ENCODE measurements at regions of chr6 and their contacts with region 1.

Region 1: DNA sequence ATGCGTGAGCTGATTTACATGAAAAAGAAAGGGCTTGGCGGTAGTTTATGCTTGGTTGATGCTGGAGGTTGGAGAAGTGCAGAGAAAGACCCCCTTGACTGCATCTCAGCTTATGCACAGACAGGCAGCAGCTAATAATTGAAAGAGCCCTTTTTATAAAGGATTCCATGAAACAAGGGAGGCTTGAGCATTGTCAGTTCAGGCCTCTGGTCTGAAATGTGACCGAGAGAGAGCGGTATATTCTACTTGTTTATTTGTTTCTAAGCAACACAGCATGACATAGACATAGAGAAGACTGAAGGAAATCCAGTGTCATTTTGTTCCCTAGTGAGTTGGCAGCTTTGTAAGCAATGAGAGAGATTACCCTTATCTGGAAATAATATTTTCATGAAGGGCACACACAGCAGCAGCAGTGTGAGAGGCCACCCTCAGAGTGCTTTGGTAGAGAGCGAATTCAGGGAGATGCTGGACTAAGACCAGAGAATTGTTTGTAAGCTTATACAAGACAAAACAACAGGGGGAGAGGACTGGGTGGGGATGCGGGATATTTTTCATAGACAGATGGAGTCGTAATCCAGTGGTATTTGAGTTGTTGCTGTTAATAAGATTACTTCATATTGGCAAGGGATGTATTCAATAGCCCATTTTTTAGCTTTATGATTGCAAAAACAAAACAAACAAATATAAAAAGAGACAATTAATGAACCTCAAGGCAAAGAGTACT is 34.6 kb upstream of the LAMA2 start:
- DNase-seq: no peak
- H3K4me3 ChIP-seq: no peak overlapping the region
- H3K27ac ChIP-seq: no peak overlapping the region
- H3K4me1 ChIP-seq: no peaks in the 10 kb centered on the region
- H3K27me3 ChIP-seq: no peaks in the 10 kb centered on the region
- CTCF ChIP-seq: no peak

Region 2: GRCh38 chr6:128827676-128828464 is 20.5 kb before region 1 on chr6:
- CTCF ChIA-PET with region 1: no interaction called
- POLR2A ChIA-PET with region 1: no interaction called
- intact Hi-C with region 1: no loop called
- DNase-seq: no peak
- H3K4me3 ChIP-seq: no peak overlapping the region
- H3K27ac ChIP-seq: no peak overlapping the region
- H3K4me1 ChIP-seq: no peaks in the 10 kb centered on the region
- H3K27me3 ChIP-seq: no peaks in the 10 kb centered on the region
- CTCF ChIP-seq: no peak

Region 3: DNA sequence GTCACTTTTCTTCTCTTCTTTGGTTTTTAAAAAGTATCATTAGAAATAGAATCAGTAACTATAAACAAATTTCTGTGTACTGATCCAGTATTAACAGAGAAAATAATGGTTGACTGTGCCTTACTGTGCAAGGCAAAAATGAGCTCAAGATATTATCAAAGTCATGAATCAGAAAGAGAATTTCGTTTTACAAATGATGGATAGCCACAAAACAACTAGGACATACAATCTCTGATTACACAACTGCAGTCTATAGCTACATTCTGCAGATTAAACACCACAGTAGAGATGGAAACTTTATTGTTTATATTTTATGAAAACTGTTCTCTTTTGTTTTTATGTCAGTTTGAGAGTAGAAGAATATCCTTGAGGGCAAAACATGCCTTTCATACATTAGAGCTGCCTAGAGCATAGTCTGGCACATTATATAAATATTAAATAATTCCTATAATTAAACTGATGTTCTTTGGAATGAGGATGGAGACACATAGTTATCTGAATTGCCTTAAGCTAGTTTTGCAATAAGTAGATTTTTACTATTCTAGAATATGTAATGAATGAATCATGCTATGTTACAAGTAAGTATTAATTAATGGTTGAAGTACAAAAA is 367.6 kb after region 1 on chr6:
- CTCF ChIA-PET with region 1: no interaction called
- POLR2A ChIA-PET with region 1: no interaction called
- intact Hi-C with region 1: no loop called
- DNase-seq: no peak
- H3K4me3 ChIP-seq: no peak overlapping the region
- H3K27ac ChIP-seq: no peak overlapping the region
- H3K4me1 ChIP-seq: no peaks in the 10 kb centered on the region; the same call in 1 of the 2 replicates
- H3K27me3 ChIP-seq: no peaks in the 10 kb centered on the region
- CTCF ChIP-seq: no peak

Region 4: DNA sequence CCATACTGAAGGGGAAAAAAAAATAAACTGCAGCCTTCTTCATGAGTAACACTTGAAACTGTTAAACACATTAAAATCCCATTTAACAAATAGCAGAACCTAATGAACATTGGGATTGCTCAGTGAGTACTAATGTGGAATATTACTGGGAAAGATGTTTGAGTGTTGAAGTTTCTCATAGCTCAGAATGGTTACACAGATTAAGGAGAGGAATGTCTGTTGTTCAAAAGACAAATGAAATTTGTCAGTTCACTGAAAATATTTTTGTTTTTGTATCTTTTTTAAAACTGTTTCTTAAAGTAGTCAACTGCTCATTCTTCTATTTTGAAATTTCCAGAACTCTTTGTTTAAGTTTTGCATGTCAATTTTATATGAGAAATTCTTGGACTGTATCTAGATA is 408.8 kb after region 1 on chr6:
- CTCF ChIA-PET with region 1: no interaction called
- POLR2A ChIA-PET with region 1: interaction called, 21 read pairs
- intact Hi-C with region 1: no loop called
- DNase-seq: no peak
- H3K4me3 ChIP-seq: no peak overlapping the region
- H3K27ac ChIP-seq: no peak overlapping the region
- H3K4me1 ChIP-seq: 0 out of 2 replicates have a peak, but pooled peaks cover 12% of the 10 kb centered on the region
- H3K27me3 ChIP-seq: no peaks in the 10 kb centered on the region
- CTCF ChIP-seq: no peak

Measured in PC-9 (cell line).